Activated CD4-positive, alpha-beta T cell treated with anti-CD3 and anti-CD28 coated beads for 36 hours (primary cell): ENCODE measurements at regions of chr13 and their contacts with region 1.

Region 1: DNA sequence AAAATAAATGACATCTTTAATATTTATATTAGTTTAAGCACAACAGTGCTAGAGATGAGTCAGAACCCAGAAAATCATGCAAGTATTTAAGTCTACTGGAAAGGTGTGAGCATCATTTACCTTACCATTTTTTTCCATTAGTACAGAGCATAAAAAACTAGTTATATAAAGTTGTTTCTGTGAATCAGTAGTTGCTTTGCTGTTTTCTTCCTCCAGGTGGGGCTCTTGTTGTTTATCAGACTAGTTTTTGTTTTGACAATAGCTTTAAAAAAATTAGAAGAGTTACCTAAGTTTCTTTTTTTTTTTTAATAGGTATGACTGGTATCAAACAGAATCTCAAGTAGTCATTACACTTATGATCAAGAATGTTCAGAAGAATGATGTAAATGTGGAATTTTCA is 12.7 kb downstream of the SUGT1 start:
- DNase-seq: no peak
- ATAC-seq: peak; percentile 26
- H3K4me3 Mint-ChIP-seq: no peak overlapping the region
- H3K27ac Mint-ChIP-seq: no peak overlapping the region
- H3K4me1 Mint-ChIP-seq: peaks cover 4% of the 10 kb centered on the region
- H3K27me3 Mint-ChIP-seq: no peaks in the 10 kb centered on the region

Region 2: GRCh38 chr13:51058461-51059167 is 1606.7 kb before region 1 on chr13:
- CTCF ChIA-PET with region 1: no interaction called
- POLR2A ChIA-PET with region 1: no interaction called
- intact Hi-C with region 1: no loop called
- DNase-seq: no peak
- ATAC-seq: no peak
- H3K4me3 Mint-ChIP-seq: no peak overlapping the region
- H3K27ac Mint-ChIP-seq: no peak overlapping the region
- H3K4me1 Mint-ChIP-seq: no peaks in the 10 kb centered on the region
- H3K27me3 Mint-ChIP-seq: no peaks in the 10 kb centered on the region

Region 3: DNA sequence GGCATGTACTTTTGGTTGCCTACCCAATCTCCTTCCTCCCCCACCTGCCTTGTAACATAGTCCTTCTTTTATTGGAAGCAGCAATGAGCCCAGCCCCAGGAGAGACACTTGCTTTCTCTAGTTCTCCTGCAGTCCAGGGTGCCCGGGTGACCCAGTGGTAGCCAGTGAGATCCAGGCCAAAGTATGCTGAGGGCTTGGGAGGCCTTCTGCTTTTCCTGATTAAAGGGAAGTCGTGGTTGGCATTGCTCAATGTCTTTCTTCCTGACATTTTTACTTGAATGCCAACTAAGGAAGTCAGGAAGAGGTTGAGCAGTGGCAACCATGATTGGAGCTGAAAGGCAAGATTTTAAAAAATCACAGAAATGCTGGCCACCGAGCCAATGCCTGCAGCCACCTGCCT is 48.6 kb after region 1 on chr13:
- CTCF ChIA-PET with region 1: no interaction called
- POLR2A ChIA-PET with region 1: no interaction called
- intact Hi-C with region 1: no loop called
- DNase-seq: no peak
- ATAC-seq: no peak
- H3K4me3 Mint-ChIP-seq: no peak overlapping the region
- H3K27ac Mint-ChIP-seq: no peak overlapping the region
- H3K4me1 Mint-ChIP-seq: no peaks in the 10 kb centered on the region
- H3K27me3 Mint-ChIP-seq: peaks cover 6% of the 10 kb centered on the region

Region 4: GRCh38 chr13:52809310-52809769 is 144.0 kb after region 1 on chr13:
- CTCF ChIA-PET with region 1: interaction called, 18 read pairs
- POLR2A ChIA-PET with region 1: no interaction called
- intact Hi-C with region 1: loop called in 1 of 2 experiments (anchors 1 kb)
- DNase-seq: peak; percentile 74
- ATAC-seq: peak; percentile 78
- H3K4me3 Mint-ChIP-seq: no peak overlapping the region
- H3K27ac Mint-ChIP-seq: no peak overlapping the region
- H3K4me1 Mint-ChIP-seq: peaks cover 4% of the 10 kb centered on the region
- H3K27me3 Mint-ChIP-seq: peaks cover 18% of the 10 kb centered on the region

Region 5: GRCh38 chr13:52921194-52921593 is 255.9 kb after region 1 on chr13:
- CTCF ChIA-PET with region 1: no interaction called
- POLR2A ChIA-PET with region 1: no interaction called
- intact Hi-C with region 1: no loop called
- DNase-seq: no peak
- ATAC-seq: no peak
- H3K4me3 Mint-ChIP-seq: no peak overlapping the region
- H3K27ac Mint-ChIP-seq: no peak overlapping the region
- H3K4me1 Mint-ChIP-seq: no peaks in the 10 kb centered on the region
- H3K27me3 Mint-ChIP-seq: peaks cover 2% of the 10 kb centered on the region

Region 6: DNA sequence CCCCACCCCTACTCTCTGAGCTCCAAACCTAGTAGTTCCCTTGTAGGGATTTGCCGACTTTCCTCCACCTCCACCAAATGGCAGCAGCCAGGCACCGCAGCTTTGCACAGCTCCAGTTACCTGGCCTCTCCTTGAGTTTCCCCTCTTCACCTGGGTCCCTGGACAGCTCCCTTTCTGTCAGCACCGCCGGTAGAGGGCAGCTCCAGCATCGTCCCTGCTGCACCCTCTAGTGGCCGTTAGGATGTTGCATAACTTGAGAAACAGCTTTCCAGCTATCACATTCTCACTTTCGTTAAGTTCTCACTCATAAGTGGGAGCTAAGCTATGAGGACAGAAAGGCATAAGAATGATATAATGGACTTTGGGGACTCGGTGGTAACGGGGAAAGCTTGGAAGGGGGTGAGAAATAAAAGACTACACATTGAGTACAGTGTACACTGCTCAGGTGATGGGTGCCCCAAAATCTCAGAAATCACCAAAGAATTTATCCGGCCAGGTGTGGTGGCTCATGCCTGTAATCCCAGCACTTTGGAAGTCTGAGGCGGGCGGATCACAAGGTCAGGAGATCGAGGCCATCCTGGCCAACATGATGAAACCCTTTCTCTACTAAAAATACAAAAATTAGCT is 302.9 kb after region 1 on chr13:
- CTCF ChIA-PET with region 1: interaction called, 9 read pairs
- POLR2A ChIA-PET with region 1: no interaction called
- intact Hi-C with region 1: loop called in 1 of 2 experiments (anchors 5 kb)
- DNase-seq: peak; percentile 80
- ATAC-seq: peak; percentile 79
- H3K4me3 Mint-ChIP-seq: no peak overlapping the region
- H3K27ac Mint-ChIP-seq: no peak overlapping the region
- H3K4me1 Mint-ChIP-seq: no peaks in the 10 kb centered on the region
- H3K27me3 Mint-ChIP-seq: peaks cover 7% of the 10 kb centered on the region